Caco-2 (cell line): ENCODE measurements at regions of chr4 and their contacts with region 1.

Region 1: DNA sequence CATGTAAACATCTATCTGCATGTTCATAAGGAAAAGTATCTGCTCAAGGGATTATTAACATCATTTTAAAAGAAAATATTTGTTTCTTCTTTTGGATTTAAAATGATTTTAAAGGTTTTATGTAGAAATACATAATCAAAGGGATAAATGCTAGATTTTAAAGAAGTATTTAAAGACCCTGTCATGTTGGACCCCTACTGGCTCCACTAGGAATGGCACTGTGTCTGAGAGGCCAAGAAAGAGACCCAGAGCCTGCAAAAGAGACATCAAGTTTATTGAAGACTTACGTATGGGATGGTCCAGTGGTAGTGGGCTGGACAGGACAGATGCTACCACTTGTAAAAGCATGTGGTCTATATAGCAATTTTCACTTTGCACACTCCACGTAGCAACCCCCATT is 78.7 kb upstream of the PCDH18 start:
- DNase-seq: peak in 1 of 2 experiments; percentile 15
- H3K4me3 ChIP-seq: no peak overlapping the region
- H3K4me3 Mint-ChIP-seq: no peak overlapping the region
- H3K27ac Mint-ChIP-seq: no peak overlapping the region
- H3K4me1 ChIP-seq: no peaks in the 10 kb centered on the region
- H3K4me1 Mint-ChIP-seq: no peaks in the 10 kb centered on the region
- H3K27me3 ChIP-seq: no peaks in the 10 kb centered on the region
- H3K27me3 Mint-ChIP-seq: peaks cover 3% of the 10 kb centered on the region
- CTCF ChIP-seq: peak; percentile 29 to 49

Region 2: GRCh38 chr4:137124278-137124932 is 486.6 kb before region 1 on chr4:
- CTCF ChIA-PET with region 1: no interaction called
- POLR2A ChIA-PET with region 1: no interaction called
- intact Hi-C with region 1: loop called (anchors 1 kb)
- DNase-seq: peak in 1 of 2 experiments; percentile 27
- H3K4me3 ChIP-seq: no peak overlapping the region
- H3K4me3 Mint-ChIP-seq: no peak overlapping the region
- H3K27ac Mint-ChIP-seq: no peak overlapping the region
- H3K4me1 ChIP-seq: no peaks in the 10 kb centered on the region
- H3K4me1 Mint-ChIP-seq: no peaks in the 10 kb centered on the region
- H3K27me3 ChIP-seq: no peaks in the 10 kb centered on the region
- H3K27me3 Mint-ChIP-seq: no peaks in the 10 kb centered on the region
- CTCF ChIP-seq: peak; percentile 46

Region 3: GRCh38 chr4:138003248-138003647 is 392.3 kb after region 1 on chr4:
- CTCF ChIA-PET with region 1: no interaction called
- POLR2A ChIA-PET with region 1: no interaction called
- intact Hi-C with region 1: no loop called
- DNase-seq: no peak
- H3K4me3 ChIP-seq: no peak overlapping the region
- H3K4me3 Mint-ChIP-seq: no peak overlapping the region
- H3K27ac Mint-ChIP-seq: no peak overlapping the region
- H3K4me1 ChIP-seq: no peaks in the 10 kb centered on the region
- H3K4me1 Mint-ChIP-seq: no peaks in the 10 kb centered on the region
- H3K27me3 ChIP-seq: no peaks in the 10 kb centered on the region
- H3K27me3 Mint-ChIP-seq: peaks cover 6% of the 10 kb centered on the region
- CTCF ChIP-seq: no peak